WTC11 (cell line): ENCODE measurements at regions of chr6 and their contacts with region 1.

Region 1: DNA sequence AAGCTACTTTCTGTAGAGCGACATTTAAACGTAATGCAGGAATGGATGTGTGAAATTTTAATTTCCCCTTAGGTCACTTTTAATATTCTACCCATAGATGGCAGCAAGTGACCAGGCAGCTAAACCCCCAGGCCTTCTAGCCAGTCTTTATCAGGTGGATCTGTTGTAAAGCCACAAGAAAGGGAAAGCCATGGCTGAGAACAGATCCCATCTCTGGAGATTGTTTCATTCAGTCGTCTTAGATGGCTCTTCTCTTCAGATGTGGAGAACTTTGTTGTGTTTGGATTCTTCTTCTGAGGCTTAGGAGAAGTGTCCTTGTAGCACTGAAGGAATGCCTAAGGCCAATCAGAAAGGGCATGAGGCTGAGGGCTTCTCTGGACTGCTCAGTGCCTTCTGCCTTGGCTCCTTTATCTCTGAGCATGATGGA is 15.8 kb upstream of the RNF182 start:
- DNase-seq: peak; percentile 40
- ATAC-seq: peak; percentile 94
- H3K4me3 Mint-ChIP-seq: no peak overlapping the region
- H3K27ac Mint-ChIP-seq: no peak overlapping the region
- H3K4me1 Mint-ChIP-seq: peaks cover 3% of the 10 kb centered on the region
- H3K27me3 Mint-ChIP-seq: peaks cover 3% of the 10 kb centered on the region
- CTCF ChIP-seq: peak; percentile 47

Region 2: DNA sequence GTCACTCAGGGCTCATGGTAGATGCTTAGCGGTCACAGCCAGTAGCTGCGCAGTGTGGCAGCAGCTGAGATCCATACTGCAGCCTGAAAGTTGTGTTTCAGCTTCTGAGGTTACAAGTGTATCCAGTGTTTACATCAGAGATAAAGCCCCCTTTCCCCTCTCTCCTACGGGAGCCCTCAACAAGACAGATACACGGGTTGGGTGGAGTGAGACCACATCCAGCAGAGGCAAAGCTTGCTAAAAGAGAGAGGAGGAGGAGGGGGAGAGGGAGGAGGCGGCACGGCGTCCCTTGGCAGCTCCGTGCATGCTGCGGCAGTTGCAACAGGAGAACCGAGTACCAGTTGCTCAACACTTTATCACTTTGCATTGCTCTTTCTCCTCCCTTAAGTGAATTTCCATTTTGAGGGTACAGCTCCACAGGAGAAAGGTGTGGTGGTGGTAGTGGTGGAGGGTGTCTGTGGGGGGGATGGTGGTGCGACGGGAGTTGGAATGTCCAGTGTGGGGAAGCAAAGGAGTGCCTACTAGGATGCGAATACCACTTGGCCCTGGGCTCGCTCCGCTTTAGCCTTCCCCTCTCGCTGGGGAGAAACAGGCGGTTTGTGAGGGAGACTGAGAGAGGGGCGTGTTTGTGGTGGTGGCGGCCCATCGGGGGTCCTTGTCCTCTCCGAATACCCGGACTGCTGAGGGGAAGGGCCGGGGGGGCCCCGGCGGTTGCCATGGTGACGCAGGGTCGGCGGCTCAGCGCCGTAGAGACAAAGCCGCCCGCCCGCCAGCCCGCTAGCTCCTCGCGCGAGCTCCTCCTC is 15.4 kb after region 1 on chr6:
- CTCF ChIA-PET with region 1: interaction called, 14 read pairs
- POLR2A ChIA-PET with region 1: interaction called, 15 read pairs
- DNase-seq: peak; percentile 71
- ATAC-seq: peak; percentile 82
- H3K4me3 Mint-ChIP-seq: peak overlapping the region; percentile 86
- H3K27ac Mint-ChIP-seq: peak overlapping the region; percentile 53
- H3K4me1 Mint-ChIP-seq: peaks cover 43% of the 10 kb centered on the region
- H3K27me3 Mint-ChIP-seq: peaks cover 40% of the 10 kb centered on the region
- CTCF ChIP-seq: no peak

Region 3: GRCh38 chr6:14016935-14017625 is 108.1 kb after region 1 on chr6:
- CTCF ChIA-PET with region 1: interaction called, 11 read pairs
- POLR2A ChIA-PET with region 1: no interaction called
- DNase-seq: no peak
- ATAC-seq: no peak; the same call in 1 of the 2 replicates
- H3K4me3 Mint-ChIP-seq: peak overlapping the region; percentile 24
- H3K27ac Mint-ChIP-seq: no peak overlapping the region
- H3K4me1 Mint-ChIP-seq: peaks cover 32% of the 10 kb centered on the region
- H3K27me3 Mint-ChIP-seq: peaks cover 40% of the 10 kb centered on the region
- CTCF ChIP-seq: no peak

Region 4: DNA sequence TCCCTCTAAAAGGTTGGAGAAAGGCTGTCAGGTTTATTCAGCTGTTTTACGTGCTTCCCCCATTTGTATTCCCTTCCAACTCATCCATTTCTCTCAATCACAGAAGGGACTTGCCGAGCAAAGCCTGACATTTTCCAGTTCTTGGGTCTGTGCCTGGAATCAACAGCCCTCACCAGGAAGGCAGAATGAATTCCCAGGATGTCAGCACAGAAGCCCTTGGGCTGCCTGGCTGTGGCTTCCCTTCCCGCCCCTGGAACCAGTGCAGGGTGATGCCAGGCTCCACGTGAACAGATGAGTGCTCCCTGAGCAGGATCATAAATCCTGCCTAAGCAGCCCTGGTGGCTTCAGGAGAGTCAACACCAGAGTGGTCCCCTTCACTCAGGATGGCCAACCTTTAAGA is 122.5 kb after region 1 on chr6:
- CTCF ChIA-PET with region 1: no interaction called
- POLR2A ChIA-PET with region 1: no interaction called
- DNase-seq: no peak
- ATAC-seq: no peak
- H3K4me3 Mint-ChIP-seq: no peak overlapping the region
- H3K27ac Mint-ChIP-seq: no peak overlapping the region
- H3K4me1 Mint-ChIP-seq: peaks cover 15% of the 10 kb centered on the region
- H3K27me3 Mint-ChIP-seq: peaks cover 15% of the 10 kb centered on the region
- CTCF ChIP-seq: no peak

Region 5: DNA sequence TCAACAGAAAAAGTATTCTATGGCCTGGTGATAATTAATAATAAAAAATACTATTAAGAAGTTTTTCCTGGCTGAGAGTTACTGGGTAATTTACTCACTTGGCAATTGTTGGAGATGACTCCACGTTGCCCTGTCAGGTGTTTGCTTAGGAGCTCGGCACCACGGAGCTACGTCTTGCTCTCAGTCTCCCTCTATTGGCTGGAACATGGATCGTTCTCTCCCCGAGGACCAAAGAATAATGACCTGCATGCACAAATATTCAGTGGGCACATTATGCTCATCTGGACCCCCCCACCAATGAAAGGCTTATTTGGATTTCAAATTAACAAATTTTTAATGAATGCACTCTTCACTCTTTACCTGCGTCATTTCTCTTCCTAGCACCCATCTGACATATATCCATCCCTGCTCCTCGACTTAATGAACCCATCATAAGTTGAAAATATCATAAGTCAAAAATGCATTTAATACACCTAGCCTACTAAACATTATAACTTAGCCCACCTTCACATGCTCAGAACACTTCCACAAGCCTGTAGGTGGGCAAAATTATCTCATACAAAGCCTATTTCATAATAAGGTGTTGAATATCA is 137.6 kb after region 1 on chr6:
- CTCF ChIA-PET with region 1: interaction called, 126 read pairs
- POLR2A ChIA-PET with region 1: no interaction called
- DNase-seq: peak; percentile 51
- ATAC-seq: peak; percentile 93
- H3K4me3 Mint-ChIP-seq: no peak overlapping the region
- H3K27ac Mint-ChIP-seq: no peak overlapping the region
- H3K4me1 Mint-ChIP-seq: no peaks in the 10 kb centered on the region
- H3K27me3 Mint-ChIP-seq: peaks cover 30% of the 10 kb centered on the region
- CTCF ChIP-seq: 0 out of 2 replicates have a peak, but pooled peaks have one; percentile 36

Region 6: GRCh38 chr6:14066782-14067406 is 157.9 kb after region 1 on chr6:
- CTCF ChIA-PET with region 1: interaction called, 52 read pairs
- POLR2A ChIA-PET with region 1: no interaction called
- DNase-seq: no peak
- ATAC-seq: peak; percentile 88
- H3K4me3 Mint-ChIP-seq: no peak overlapping the region
- H3K27ac Mint-ChIP-seq: no peak overlapping the region
- H3K4me1 Mint-ChIP-seq: no peaks in the 10 kb centered on the region
- H3K27me3 Mint-ChIP-seq: no peaks in the 10 kb centered on the region; the same call in 1 of the 2 replicates
- CTCF ChIP-seq: peak; percentile 37; the same call in 1 of the 2 replicates

Region 7: GRCh38 chr6:14129575-14129974 is 220.6 kb after region 1 on chr6:
- CTCF ChIA-PET with region 1: interaction called, 13 read pairs
- POLR2A ChIA-PET with region 1: no interaction called
- DNase-seq: peak; percentile 55
- ATAC-seq: peak; percentile 97
- H3K4me3 Mint-ChIP-seq: no peak overlapping the region
- H3K27ac Mint-ChIP-seq: no peak overlapping the region
- H3K4me1 Mint-ChIP-seq: peaks cover 30% of the 10 kb centered on the region
- H3K27me3 Mint-ChIP-seq: no peaks in the 10 kb centered on the region; the same call in 1 of the 2 replicates
- CTCF ChIP-seq: no peak